Psoas muscle (tissue), 8 donors: ENCODE measurements at regions of chr20 and their contacts with region 1.

Region 1: GRCh38 chr20:16517946-16518783 is 55.1 kb downstream of the KIF16B start:
- DNase-seq: no peak
- ATAC-seq: peak; percentile 93 to 99 (median 97)
- H3K4me3 ChIP-seq: no peak overlapping the region
- H3K27ac ChIP-seq: no peak overlapping the region
- H3K4me1 ChIP-seq: no peaks in the 10 kb centered on the region
- H3K27me3 ChIP-seq: no peaks in the 10 kb centered on the region
- CTCF ChIP-seq: peak; percentile 71

Region 2: DNA sequence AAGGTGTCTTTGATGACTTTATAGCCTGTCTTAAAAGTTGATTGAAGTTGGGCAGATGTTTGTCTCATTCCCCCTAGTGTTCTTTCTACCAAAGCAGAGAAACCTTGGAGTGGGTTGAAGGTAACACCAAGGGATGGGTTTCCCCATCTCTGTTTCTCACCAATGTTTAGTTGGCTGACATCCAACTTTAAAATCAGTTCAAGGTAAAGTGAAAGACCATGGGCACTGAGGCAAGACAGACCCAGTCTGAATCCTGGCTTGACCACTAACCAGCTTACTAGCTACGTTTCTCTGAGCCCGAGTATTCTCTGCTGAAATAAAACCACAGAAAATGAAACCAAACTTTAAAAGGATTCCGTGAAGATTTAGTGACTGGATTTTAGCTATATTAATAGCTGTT is 203.8 kb before region 1 on chr20:
- intact Hi-C with region 1: no loop called
- DNase-seq: no peak
- ATAC-seq: no peak
- H3K4me3 ChIP-seq: no peak overlapping the region
- H3K27ac ChIP-seq: no peak overlapping the region
- H3K4me1 ChIP-seq: no peaks in the 10 kb centered on the region
- H3K27me3 ChIP-seq: no peaks in the 10 kb centered on the region
- CTCF ChIP-seq: no peak

Region 3: DNA sequence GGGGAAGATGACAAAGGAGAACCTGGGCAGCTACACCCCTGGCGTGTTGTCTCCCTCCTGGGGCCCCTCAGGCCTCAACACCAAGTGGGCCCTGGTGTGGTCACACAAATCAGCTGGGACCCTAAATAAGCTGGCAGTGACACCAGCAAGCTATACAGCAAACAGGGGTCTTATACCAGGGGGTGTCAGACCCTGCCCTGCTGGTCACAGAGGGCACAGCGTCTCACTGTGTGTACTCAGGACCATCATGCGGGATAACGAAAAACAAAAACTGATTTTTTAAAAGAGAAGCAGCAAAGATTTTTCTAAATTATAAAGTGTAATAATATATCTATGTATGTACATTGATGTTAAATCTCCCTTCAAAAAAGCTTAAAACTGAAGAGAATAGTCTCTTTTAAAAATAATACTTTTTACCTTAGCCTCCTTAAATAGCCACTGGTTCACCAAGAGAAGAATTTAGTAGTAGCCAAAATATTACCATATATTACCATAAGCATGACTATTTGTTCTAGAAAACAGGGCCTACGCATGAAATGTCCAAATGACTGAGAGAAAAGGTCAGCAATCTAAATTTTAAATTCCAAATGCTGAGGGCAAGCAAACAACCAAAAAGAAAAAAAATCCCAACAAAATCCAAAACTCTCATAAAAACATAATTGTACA is 165.3 kb before region 1 on chr20:
- intact Hi-C with region 1: no loop called
- DNase-seq: no peak
- ATAC-seq: no peak
- H3K4me3 ChIP-seq: no peak overlapping the region
- H3K27ac ChIP-seq: peak overlapping the region; percentile 61
- H3K4me1 ChIP-seq: peaks cover 27% of the 10 kb centered on the region
- H3K27me3 ChIP-seq: no peaks in the 10 kb centered on the region
- CTCF ChIP-seq: no peak

Region 4: GRCh38 chr20:16621435-16622141 is 103.4 kb after region 1 on chr20:
- intact Hi-C with region 1: loop called in 1 of 2 experiments (anchors 5 kb)
- DNase-seq: no peak
- ATAC-seq: peak in 2 of 4 donors; percentile 54 to 60
- H3K4me3 ChIP-seq: no peak overlapping the region
- H3K27ac ChIP-seq: no peak overlapping the region
- H3K4me1 ChIP-seq: no peaks in the 10 kb centered on the region
- H3K27me3 ChIP-seq: no peaks in the 10 kb centered on the region
- CTCF ChIP-seq: no peak

Region 5: DNA sequence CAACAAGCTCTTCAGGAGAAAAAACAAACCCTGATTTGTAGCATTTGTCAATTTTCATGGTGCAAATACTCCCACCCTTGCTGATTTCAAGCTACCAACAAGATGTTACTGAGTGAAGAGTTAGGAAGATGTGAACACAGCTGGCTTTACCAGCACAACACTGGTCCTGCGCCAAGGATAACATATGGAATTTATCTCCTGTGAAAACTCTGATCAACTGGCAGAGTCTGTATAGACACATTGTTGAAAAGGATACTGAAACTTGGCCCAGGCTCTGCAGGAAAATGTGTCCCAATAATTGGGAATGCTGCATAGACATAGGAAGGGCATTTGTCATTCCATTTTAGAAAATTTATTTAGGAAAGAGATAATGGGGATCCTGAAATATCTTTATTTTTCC is 259.0 kb after region 1 on chr20:
- intact Hi-C with region 1: no loop called
- DNase-seq: no peak
- ATAC-seq: no peak
- H3K4me3 ChIP-seq: no peak overlapping the region
- H3K27ac ChIP-seq: no peak overlapping the region
- H3K4me1 ChIP-seq: no peaks in the 10 kb centered on the region
- H3K27me3 ChIP-seq: no peaks in the 10 kb centered on the region
- CTCF ChIP-seq: no peak